ENCODE measurements at regions of chr10 and their contacts with region 1.

Region 1: GRCh38 chr10:63629363-63630084 is 108.3 kb downstream of the REEP3 start:
- DNase-seq: peak; percentile 76 to 81 (median 77)
- H3K4me3 ChIP-seq: peak overlapping the region; percentile 59 to 70
- H3K4me3 Mint-ChIP-seq: peak overlapping the region; percentile 92 to 97 (median 95)
- H3K27ac ChIP-seq: peak overlapping the region; percentile 55
- H3K27ac Mint-ChIP-seq: peak overlapping the region; percentile 57 to 96 (median 92)
- H3K4me1 ChIP-seq: peaks cover 28% of the 10 kb centered on the region
- H3K4me1 Mint-ChIP-seq: peaks cover 17 to 29% (median 22%) of the 10 kb centered on the region in 4 donors
- H3K27me3 ChIP-seq: no peaks in the 10 kb centered on the region
- H3K27me3 Mint-ChIP-seq: no peaks in the 10 kb centered on the region

Region 2: DNA sequence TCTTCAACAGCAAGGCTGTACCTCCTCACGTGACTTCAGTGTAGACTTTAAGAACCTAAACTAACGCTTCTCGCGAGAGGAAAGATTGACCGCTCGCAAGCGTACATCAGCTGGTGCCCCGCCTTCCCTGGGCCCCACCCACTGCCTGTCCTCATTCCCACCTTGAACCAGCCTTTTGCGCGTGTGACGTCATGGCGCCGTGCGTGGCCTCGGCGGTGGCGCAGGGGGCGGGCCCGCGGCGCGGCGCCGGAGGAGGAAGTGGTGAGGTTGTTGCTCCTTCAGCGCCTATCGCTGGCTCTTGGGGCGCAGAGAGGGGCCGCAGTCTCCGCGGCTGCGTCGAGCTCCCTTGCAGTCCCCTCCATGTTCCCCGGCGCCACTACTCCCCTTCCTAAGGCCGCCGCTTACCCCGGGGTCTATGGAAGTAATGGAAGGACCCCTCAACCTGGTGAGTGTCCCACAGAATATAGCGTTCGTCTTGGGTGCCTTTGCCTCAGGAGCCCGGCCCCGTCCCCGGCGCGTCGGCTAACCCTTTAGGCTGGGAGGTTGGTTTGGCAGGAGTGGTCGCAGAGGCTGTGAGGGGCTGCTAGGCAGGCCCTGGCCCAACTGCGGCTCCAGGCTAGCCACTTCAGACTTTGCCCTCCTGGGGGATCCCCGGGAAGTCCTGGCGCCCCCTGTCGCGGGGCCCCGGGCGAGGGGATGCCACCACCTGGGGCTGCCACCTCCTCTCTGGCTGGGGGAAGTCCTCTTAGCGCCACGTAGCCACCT is 496.3 kb before region 1 on chr10 and contains the start of gene NRBF2:
- CTCF ChIA-PET with region 1: interaction called, 5 read pairs
- POLR2A ChIA-PET with region 1: interaction called, 7 read pairs
- intact Hi-C with region 1: loop called (anchors 1 kb)
- DNase-seq: peak; percentile 97 to 98 (median 98)
- H3K4me3 ChIP-seq: peak within 1 kb of the TSS; percentile 81 to 88
- H3K4me3 Mint-ChIP-seq: peak within 1 kb of the TSS; percentile 92 to 95 (median 92)
- H3K27ac ChIP-seq: peak within 1 kb of the TSS; percentile 96
- H3K27ac Mint-ChIP-seq: peak within 1 kb of the TSS; percentile 92 to 98 (median 97)
- H3K4me1 ChIP-seq: peaks cover 46% of the 10 kb centered on the region
- H3K4me1 Mint-ChIP-seq: peaks cover 24 to 45% (median 35%) of the 10 kb centered on the region in 4 donors
- H3K27me3 ChIP-seq: no peaks in the 10 kb centered on the region
- H3K27me3 Mint-ChIP-seq: peaks cover 0 to 7% of the 10 kb centered on the region in 2 donors
- total RNA-seq, gene NRBF2: 17.8 to 18.2 TPM

Region 3: GRCh38 chr10:63166742-63167258 is 462.7 kb before region 1 on chr10:
- CTCF ChIA-PET with region 1: interaction called, 115 read pairs
- POLR2A ChIA-PET with region 1: interaction called, 10 read pairs
- intact Hi-C with region 1: loop called (anchors 1 kb)
- DNase-seq: peak; percentile 50 to 61 (median 56)
- H3K4me3 ChIP-seq: no peak overlapping the region
- H3K4me3 Mint-ChIP-seq: no peak overlapping the region
- H3K27ac ChIP-seq: no peak overlapping the region
- H3K27ac Mint-ChIP-seq: peak overlapping the region in 2 of 7 donors; percentile 36 to 67
- H3K4me1 ChIP-seq: no peaks in the 10 kb centered on the region
- H3K4me1 Mint-ChIP-seq: peaks cover 0 to 2% (median 1%) of the 10 kb centered on the region in 4 donors
- H3K27me3 ChIP-seq: no peaks in the 10 kb centered on the region
- H3K27me3 Mint-ChIP-seq: no peaks in the 10 kb centered on the region

Region 4: DNA sequence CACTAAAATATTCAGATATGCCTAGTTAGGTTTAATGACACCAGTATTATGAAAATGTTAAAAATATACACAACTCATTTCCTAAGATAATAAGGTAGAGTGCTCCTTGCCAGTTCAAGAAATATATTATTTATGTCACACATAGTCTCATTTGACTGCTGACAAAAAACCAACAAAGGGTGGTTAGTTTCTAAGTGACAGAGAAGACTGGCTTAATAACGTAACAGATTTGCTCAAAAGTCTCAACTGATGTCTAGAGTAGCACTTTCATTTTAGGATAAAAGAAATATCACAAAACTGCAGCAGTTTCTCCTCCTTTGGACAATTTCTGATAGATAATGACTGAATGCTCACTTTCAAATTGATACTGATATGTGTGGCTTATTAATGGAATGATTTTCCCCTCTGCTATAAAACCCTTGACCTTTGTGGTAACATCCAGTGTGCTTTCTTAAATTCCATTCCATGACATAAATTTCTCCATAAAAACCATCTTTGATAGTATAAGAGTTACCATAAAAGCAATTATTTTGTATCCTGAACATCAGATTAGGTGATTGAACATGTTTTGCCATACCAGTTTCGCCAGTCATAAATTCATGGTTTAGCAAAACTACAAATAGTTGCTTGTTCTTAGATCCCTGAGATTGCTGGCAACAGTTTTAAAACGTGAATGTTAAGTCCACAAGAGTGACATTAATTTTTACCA is 402.2 kb before region 1 on chr10:
- CTCF ChIA-PET with region 1: interaction called, 28 read pairs
- POLR2A ChIA-PET with region 1: no interaction called
- intact Hi-C with region 1: no loop called
- DNase-seq: peak in 2 of 5 donors; percentile 22 to 43
- H3K4me3 ChIP-seq: no peak overlapping the region
- H3K4me3 Mint-ChIP-seq: peak overlapping the region in 6 of 8 donors; percentile 16 to 76 (median 60)
- H3K27ac ChIP-seq: no peak overlapping the region
- H3K27ac Mint-ChIP-seq: peak overlapping the region; percentile 38 to 95 (median 89)
- H3K4me1 ChIP-seq: peaks cover 64% of the 10 kb centered on the region
- H3K4me1 Mint-ChIP-seq: peaks cover 42 to 73% (median 48%) of the 10 kb centered on the region in 4 donors
- H3K27me3 ChIP-seq: no peaks in the 10 kb centered on the region
- H3K27me3 Mint-ChIP-seq: no peaks in the 10 kb centered on the region

Region 5: DNA sequence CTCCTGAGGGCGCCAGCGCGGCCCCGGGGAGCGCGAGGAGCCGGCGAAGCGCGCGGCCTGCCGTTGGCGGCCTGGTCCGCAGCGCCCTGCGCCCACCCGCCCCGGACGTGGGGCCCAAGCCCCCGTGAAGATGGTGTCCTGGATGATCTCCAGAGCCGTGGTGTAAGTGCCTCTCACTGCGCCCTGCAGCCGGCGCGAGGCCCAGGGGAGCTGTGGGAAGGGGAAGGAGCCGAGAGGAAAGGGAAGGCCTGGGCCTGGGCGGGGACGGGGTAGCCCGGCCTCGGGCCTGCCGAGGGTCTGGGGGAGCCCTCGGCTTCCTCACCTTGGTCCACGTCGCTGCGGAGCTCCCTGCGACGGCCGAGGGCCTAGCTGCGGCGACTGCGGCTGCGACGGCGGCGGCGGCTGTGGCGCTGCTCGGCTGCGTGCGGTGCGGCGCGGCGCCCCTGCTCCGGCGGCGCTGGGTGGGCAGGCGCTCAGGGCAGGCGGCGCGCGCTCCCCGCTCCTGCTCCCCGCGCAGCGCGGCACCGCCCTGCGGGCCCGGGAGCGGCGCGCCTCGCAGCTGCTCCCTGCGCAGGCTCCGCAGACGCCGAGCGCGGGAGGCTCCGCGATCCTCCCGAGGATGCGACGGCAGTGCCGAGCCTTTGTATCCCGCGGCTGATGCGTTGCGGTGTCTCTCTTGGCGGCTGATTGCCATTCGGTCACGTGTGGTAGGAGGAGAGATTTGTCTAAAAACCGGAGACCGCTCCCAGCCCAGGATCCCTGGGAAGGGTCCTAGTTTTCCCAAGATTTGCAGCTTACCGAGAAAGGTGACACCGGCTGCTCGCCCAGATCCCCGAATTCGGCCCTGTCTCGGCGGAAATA is 107.9 kb before region 1 on chr10:
- CTCF ChIA-PET with region 1: interaction called, 16 read pairs
- POLR2A ChIA-PET with region 1: interaction called, 24 read pairs
- intact Hi-C with region 1: loop called (anchors 1 kb)
- DNase-seq: peak; percentile 53 to 71 (median 59)
- H3K4me3 ChIP-seq: peak overlapping the region; percentile 79 to 92
- H3K4me3 Mint-ChIP-seq: peak overlapping the region; percentile 80 to 93 (median 86)
- H3K27ac ChIP-seq: peak overlapping the region; percentile 78
- H3K27ac Mint-ChIP-seq: peak overlapping the region; percentile 89 to 96 (median 94)
- H3K4me1 ChIP-seq: peaks cover 63% of the 10 kb centered on the region
- H3K4me1 Mint-ChIP-seq: peaks cover 47 to 79% (median 66%) of the 10 kb centered on the region in 4 donors
- H3K27me3 ChIP-seq: no peaks in the 10 kb centered on the region
- H3K27me3 Mint-ChIP-seq: no peaks in the 10 kb centered on the region

Region 6: GRCh38 chr10:63588436-63589167 is 40.9 kb before region 1 on chr10:
- CTCF ChIA-PET with region 1: no interaction called
- POLR2A ChIA-PET with region 1: no interaction called
- intact Hi-C with region 1: no loop called
- DNase-seq: no peak
- H3K4me3 ChIP-seq: no peak overlapping the region
- H3K4me3 Mint-ChIP-seq: no peak overlapping the region
- H3K27ac ChIP-seq: no peak overlapping the region
- H3K27ac Mint-ChIP-seq: no peak overlapping the region
- H3K4me1 ChIP-seq: no peaks in the 10 kb centered on the region
- H3K4me1 Mint-ChIP-seq: peaks cover 0 to 16% (median 3%) of the 10 kb centered on the region in 4 donors
- H3K27me3 ChIP-seq: no peaks in the 10 kb centered on the region
- H3K27me3 Mint-ChIP-seq: no peaks in the 10 kb centered on the region

Measured in CD4-positive, alpha-beta memory T cell (primary cell).